Activated T-helper 1 cell treated with anti-CD3 and anti-CD28 coated beads, Interleukin-12 subunit alpha, Interleukin-12 subunit beta, Interleukin-2, Interleukin-4 antibody, amounts not matched to agents 30 ng/mL and 10 ng/mL and 1 ng/mL, durations not matched to agents 14 hours and 24 hours and 36 hours (primary cell): ENCODE measurements at regions of chr4 and their contacts with region 1.

Region 1: DNA sequence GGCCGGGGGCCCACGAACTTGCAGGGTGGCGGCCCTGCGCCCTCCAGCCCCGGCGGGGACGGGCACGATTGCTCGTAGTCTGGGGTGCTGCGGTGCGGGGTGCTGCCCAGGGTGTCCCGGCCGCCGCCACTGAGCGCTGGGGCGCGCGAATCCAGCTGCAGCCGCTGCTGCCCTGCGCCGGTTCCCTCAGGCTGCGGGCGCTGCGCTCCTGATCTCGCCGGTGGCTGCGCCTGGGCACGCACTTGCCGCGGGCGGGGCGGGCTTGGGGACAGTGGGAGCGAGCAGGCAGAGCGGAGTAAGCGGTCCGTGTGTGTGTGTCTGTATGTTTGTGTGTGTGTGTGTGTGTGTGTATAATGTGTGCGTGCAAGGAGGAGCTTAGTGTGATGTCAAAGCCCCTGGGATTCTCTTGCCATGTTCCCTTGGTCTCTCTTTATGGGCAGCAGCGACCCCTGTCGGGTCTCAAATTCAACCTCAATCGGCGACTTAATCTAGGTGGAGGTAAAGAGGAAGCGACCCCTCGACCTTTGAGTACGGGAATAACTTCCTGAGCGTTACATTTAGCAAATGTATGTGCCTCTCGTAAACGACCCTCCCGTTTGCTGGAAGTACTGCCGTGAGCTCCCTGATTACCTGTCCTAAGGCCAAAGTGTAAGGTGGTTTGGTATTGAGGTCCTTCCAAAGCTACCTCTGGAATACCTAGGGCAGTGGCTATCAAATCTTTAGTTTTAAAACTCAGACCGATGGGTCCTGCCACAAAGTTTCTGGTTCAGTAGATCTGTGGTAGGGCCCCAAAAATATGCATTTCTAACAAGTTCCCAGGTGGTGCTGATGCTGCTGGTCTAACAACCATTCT is at the start of gene RNF150:
- DNase-seq: peak; percentile 2
- H3K4me3 Mint-ChIP-seq: peak within 1 kb of the TSS; percentile 87
- H3K27ac Mint-ChIP-seq: peak within 1 kb of the TSS; percentile 38
- H3K4me1 Mint-ChIP-seq: peaks cover 8% of the 10 kb centered on the region
- H3K27me3 Mint-ChIP-seq: peaks cover 68% of the 10 kb centered on the region
- total RNA-seq, gene RNF150: 0.07 TPM in 1 of 2 replicates, not detected in the other

Region 2: DNA sequence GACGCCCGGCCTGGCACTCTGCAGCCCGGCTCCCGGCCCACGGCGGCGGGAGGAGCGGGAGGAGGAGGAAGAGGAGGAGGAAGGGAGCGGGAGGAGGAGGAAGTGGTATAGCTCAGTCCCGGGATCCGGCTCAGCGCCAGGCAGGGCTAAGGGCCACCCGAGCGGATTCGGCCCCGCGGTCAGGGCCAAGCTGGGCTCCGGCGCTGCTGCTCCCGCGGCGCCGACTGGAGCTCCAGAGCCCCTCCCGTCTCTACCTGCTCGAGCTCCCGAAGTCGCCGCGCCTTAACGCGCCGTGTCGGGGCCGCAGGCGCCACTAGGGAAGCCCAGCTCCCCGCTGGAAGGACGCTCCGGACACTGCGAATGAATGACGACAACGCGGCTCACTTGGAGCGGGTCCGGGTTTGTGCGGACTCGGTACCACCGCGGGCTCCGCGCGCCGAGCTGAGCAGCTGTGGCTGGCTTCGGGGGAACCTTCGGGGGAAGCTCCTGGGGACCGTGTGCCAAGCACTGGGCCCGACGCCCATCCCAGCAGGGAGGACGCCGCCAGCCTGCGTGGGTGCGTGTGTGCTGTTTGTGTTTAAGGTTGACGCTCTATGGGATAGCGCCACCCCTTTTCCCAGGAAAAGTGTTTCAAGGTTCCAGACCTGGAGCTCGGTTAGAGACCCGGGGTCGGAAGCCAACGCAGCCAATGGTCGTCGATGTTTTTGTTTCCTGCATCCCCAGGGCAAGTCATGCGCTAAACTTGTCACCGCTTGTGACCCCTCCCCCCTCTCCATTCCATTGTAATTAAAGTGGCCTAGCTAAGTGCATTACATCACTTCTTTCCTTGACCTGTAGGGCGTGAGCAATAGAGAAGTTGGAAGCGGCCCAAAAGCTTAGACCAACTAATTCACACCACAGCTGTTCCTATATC is 376.8 kb before region 1 on chr4 and contains the start of gene TBC1D9:
- intact Hi-C with region 1: loop called (anchors 5 kb)
- DNase-seq: no peak
- H3K4me3 Mint-ChIP-seq: no peak within 1 kb of the TSS
- H3K27ac Mint-ChIP-seq: no peak within 1 kb of the TSS
- H3K4me1 Mint-ChIP-seq: no peaks in the 10 kb centered on the region
- H3K27me3 Mint-ChIP-seq: peaks cover 52% of the 10 kb centered on the region
- total RNA-seq, gene TBC1D9: 0.29 TPM in 1 of 2 replicates, not detected in the other